Sigmoid colon (tissue), 7 donors: ENCODE measurements at regions of chr9 and their contacts with region 1.

Region 1: DNA sequence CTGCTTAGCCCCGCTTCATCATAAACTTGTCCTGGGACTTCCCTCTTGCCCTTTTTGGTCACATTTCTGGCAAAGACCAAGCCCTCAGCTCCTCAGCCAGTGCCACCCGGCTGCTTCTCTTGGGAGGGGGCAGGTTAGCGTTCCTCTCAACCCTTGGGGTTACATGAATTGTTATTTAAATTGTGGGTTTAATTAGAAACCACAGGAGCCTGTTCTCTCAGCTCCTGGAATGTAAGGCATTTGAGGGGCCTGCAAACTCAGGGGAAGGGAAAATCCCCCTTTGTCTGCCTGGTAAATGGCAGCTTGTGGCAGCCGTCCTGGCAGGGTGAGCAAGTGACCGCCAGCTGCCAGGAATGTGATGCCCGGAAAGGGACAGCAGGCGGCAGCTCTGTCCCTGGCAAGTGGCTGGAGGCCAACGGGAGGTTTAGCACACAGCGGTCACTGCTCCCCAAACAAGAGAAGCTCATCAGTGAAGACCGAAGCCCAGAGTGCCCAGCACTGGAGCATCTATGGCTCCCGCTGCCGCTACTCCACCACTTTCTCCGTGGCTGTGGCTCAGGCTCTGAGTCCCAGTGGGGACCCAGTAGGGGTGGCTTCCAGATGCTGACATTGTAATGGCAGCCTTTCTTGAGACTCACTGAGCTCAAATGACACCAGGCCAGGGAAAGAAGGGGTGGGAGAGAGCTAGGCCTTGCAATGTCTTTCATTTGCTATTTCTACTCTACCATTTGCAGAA is 51.7 kb downstream of the SHB start:
- DNase-seq: no peak
- H3K4me3 ChIP-seq: no peak overlapping the region
- H3K27ac ChIP-seq: peak overlapping the region; percentile 72 to 90 (median 82)
- H3K4me1 ChIP-seq: peaks cover 0 to 68% (median 58%) of the 10 kb centered on the region in 4 donors
- H3K27me3 ChIP-seq: no peaks in the 10 kb centered on the region
- CTCF ChIP-seq: no peak
- EP300 ChIP-seq: no peak
- POLR2A ChIP-seq: no peak

Region 2: GRCh38 chr9:37976714-37977477 is 40.4 kb before region 1 on chr9:
- intact Hi-C with region 1: loop called (anchors 5 kb)
- DNase-seq: peak; percentile 78
- H3K4me3 ChIP-seq: no peak overlapping the region
- H3K27ac ChIP-seq: peak overlapping the region in 2 of 4 donors; percentile 73 to 76
- H3K4me1 ChIP-seq: peaks cover 2 to 22% (median 16%) of the 10 kb centered on the region in 4 donors
- H3K27me3 ChIP-seq: no peaks in the 10 kb centered on the region
- CTCF ChIP-seq: no peak
- EP300 ChIP-seq: peak in 2 of 4 donors; percentile 25 to 47
- POLR2A ChIP-seq: no peak

Region 3: DNA sequence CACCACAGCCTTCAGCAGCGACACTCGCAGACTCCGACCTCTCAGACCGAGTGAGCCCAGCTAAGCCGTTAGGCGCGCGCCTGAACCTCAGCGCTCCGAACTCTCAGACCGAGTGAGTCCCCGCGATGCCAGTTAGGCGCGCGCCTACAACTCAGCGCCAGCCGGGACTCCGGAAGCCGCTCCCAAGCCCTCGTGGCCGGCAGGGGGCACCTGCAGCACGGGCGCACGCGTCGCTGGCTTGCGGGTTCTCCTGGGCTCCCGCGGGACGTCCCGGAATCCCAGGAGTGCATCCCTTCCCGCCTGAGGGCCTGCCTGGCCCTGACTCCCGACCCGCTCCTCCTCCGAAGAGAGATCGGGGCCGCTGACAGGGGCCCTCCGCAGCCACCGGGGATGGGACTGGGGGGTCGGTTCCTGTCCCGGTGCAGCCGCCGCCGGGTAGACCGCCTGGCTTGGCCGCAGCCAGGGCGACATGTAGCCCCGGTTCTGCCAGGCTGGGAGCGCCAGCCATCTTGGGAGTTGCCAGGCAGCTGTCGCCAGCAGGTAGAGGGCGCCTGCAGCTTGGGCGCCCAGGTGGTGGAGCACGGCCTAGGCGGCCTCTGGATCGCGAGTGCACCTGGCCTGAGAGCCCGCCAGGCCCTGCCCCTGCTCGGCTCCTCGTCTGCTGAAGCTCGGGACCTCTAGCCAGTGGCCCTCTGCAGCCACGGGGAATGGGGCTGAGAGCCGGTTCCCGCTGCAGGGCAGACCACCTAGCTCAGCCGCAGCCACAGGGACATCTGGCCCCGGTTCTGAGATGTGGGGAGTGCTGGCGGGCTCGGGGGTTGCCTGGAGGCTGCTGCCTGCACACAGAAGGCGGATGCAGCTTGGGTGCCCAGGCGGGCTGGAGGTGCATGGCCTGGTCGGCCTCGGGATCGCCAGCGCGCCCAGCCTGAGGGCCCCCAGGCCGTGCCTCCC is 603.4 kb after region 1 on chr9 and contains the start of gene ANKRD18A:
- intact Hi-C with region 1: no loop called
- DNase-seq: peak; percentile 72
- H3K4me3 ChIP-seq: peak within 1 kb of the TSS; percentile 23 to 51 (median 42)
- H3K27ac ChIP-seq: peak within 1 kb of the TSS in 3 of 4 donors; percentile 9 to 45 (median 18)
- H3K4me1 ChIP-seq: peaks cover 0 to 31% (median 27%) of the 10 kb centered on the region in 4 donors
- H3K27me3 ChIP-seq: peaks cover 25 to 86% (median 49%) of the 10 kb centered on the region in 3 donors
- CTCF ChIP-seq: peak in 2 of 4 experiments; percentile 37 to 57
- EP300 ChIP-seq: no peak
- POLR2A ChIP-seq: no peak
- total RNA-seq, gene ANKRD18A: under 0.01 to 0.28 (median 0.07) TPM